ENCODE measurements at regions of chr19 and their contacts with region 1.

Region 1: DNA sequence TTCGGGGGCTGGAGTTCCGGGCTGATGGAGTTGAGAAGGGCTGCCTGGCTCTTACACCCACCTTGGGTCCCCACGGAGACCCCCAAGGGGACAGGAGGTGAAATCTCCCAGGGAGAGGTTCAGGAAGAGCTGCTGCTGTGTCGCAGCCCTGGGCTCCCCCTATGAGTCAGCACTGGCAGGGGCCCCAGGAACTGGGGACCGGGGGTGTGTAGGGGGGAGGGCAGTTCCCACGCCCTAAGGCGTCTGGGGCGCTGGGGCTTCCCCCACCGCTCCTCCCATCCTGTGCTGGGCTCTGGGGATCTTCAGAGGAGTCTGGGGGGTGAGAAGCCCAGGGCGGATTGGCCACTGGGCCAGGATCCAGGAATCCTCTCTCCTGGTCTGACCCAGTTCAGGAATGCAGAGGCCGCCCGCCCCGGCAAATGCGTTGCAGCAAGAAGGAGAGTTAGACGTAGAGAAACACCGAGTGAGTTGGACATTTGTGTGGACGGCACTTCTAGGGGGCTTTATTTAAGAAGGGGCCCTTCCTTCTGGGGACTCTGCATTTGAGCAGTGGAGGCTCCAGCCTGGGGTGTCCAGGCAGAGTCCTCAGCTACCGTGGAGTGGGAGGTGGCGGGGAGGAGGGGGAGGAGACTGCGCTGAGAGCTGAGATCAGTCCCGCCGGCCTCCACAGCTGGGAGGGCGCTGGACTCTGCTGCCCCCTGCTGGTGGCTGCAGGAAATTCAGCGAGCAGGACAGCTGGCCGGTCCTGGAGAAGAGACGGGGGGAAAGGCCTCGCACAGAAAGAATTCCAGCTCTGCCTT is 15.0 kb upstream of the NANOS3 start:
- DNase-seq: peak; percentile 98
- H3K4me3 ChIP-seq: peak overlapping the region; percentile 22 to 66 (median 44)
- H3K27ac ChIP-seq: peak overlapping the region; percentile 83 to 92 (median 88)
- H3K4me1 ChIP-seq: peaks cover 8 to 53% (median 41%) of the 10 kb centered on the region in 6 donors
- H3K27me3 ChIP-seq: peaks cover 0 to 39% (median 20%) of the 10 kb centered on the region in 7 donors
- CTCF ChIP-seq: peak; percentile 88 to 100 (median 98)
- POLR2A ChIP-seq: peak in 1 of 3 donors; percentile 32

Region 2: DNA sequence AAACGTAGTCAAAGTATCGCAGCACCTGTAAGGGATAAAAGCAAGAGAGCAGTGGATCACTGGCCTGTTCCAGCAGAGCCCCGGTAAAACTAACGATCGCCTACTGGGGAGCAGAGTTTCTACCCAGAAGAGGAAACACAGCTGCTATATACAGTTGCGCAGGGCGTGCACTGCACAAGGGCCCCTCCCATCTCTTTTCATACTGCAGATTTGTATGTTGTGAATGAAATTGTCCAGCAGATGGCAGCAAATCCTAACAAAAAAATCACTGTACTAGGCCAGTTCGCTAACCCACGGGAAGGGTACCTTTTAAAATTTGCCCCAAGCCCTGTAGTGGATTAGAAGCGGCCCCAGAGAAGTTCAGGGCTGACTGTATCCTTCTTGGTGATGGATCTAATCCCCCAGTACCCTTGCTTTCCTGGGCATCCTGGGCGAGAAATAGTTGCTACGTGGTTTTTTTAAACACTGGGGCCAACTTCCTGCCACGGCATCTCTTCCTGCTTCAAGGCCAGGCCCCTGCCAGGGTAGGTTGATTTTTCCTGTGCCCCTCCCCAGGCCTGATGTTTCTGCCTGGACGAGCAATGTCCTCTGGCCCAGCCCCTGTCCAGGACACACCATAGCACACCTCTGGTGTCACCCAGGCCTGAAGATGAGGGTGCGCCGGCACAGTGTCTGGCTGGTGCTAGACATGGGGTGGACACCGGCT is 584.7 kb before region 1 on chr19:
- intact Hi-C with region 1: loop called (anchors 10 kb)
- DNase-seq: peak; percentile 81
- H3K4me3 ChIP-seq: peak overlapping the region in 1 of 8 donors; percentile 32
- H3K27ac ChIP-seq: peak overlapping the region in 7 of 8 donors; percentile 32 to 77 (median 54)
- H3K4me1 ChIP-seq: peaks cover 0 to 12% (median 9%) of the 10 kb centered on the region in 6 donors
- H3K27me3 ChIP-seq: peaks cover 0 to 20% (median 0%) of the 10 kb centered on the region in 7 donors
- CTCF ChIP-seq: peak; percentile 69 to 90 (median 81)
- POLR2A ChIP-seq: no peak

Region 3: DNA sequence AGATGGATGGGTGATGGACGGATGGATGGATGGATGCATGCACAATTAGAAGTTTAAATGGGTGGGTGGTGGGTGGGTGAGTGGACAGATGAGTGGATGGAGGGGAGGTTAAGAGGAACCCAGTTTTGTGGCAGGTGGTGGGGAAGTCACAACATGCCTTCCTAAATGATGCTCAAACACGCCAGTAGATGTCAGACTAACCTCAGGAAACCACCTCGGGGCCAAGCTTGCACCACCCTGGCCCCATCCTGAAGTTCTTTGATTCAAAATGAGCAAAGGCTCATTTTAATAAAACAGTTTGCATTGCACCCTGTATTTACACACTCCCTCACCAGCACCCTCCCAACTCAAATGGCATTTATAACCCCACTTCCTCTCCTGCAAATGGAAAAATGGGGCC is 264.3 kb before region 1 on chr19:
- intact Hi-C with region 1: loop called (anchors 5 kb)
- DNase-seq: no peak
- H3K4me3 ChIP-seq: no peak overlapping the region
- H3K27ac ChIP-seq: no peak overlapping the region
- H3K4me1 ChIP-seq: no peaks in the 10 kb centered on the region
- H3K27me3 ChIP-seq: peaks cover 0 to 60% (median 0%) of the 10 kb centered on the region in 7 donors
- CTCF ChIP-seq: peak in 10 of 11 experiments; percentile 18 to 70 (median 52)
- POLR2A ChIP-seq: no peak

Region 4: DNA sequence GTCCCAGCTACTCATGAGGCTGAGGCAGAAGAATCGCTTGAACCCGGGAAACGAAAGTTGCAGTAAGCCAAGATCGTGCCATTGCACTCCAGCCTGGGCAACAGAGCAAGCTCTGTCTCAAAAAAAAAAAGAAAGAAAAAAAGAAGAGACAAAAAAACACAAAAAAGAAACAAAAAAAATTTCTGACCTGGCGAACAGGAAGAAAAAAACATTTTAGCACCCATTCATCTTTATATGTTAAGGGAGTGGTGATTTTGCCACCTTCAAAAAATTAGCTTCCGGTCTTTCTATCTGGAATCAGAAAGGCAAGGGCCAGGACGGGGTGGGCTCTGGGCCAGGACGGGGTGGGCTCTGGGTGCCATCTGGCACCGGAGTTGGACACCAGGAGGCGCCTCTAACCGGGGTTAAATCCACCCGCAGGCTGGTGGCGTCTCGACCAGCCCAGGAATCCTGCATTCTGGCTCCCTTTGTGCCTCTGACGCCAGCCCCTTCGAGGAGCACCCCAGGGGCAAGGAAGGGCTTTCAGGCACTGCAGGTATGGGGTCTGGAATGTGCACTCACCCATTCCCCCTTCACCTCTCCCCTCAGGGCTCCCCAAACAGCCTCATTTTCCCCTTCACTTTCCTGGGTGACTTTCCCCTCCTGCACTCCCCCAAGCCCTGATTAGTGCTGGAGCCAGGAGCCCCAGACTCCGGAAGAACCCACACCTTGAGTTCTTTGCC is 77.0 kb before region 1 on chr19:
- intact Hi-C with region 1: loop called (anchors 2 kb)
- DNase-seq: peak; percentile 91
- H3K4me3 ChIP-seq: peak overlapping the region in 1 of 8 donors; percentile 35
- H3K27ac ChIP-seq: peak overlapping the region in 2 of 8 donors; percentile 34 to 51
- H3K4me1 ChIP-seq: peaks cover 26 to 80% (median 56%) of the 10 kb centered on the region in 6 donors
- H3K27me3 ChIP-seq: no peaks in the 10 kb centered on the region
- CTCF ChIP-seq: peak; percentile 55 to 88 (median 77)
- POLR2A ChIP-seq: no peak

Region 5: GRCh38 chr19:13920940-13921761 is 59.2 kb after region 1 on chr19:
- intact Hi-C with region 1: no loop called
- DNase-seq: no peak
- H3K4me3 ChIP-seq: no peak overlapping the region
- H3K27ac ChIP-seq: no peak overlapping the region
- H3K4me1 ChIP-seq: peaks cover 0 to 9% (median under 1%) of the 10 kb centered on the region in 6 donors
- H3K27me3 ChIP-seq: no peaks in the 10 kb centered on the region
- CTCF ChIP-seq: no peak
- POLR2A ChIP-seq: no peak